ENCODE measurements at regions of chr15 and their contacts with region 1.

Region 1: GRCh38 chr15:82108489-82109078 is 62.8 kb upstream of the MEX3B start:
- DNase-seq: no peak
- ATAC-seq: peak; percentile 99
- H3K4me3 ChIP-seq: no peak overlapping the region
- H3K27ac ChIP-seq: no peak overlapping the region
- H3K4me1 ChIP-seq: no peaks in the 10 kb centered on the region
- H3K27me3 ChIP-seq: no peaks in the 10 kb centered on the region; a peak in 1 of 4 replicates
- CTCF ChIP-seq: peak; percentile 91 to 96 (median 93)
- EP300 ChIP-seq: no peak
- POLR2A ChIP-seq: no peak
- RAD21 ChIP-seq: peak; percentile 82

Region 2: GRCh38 chr15:81666839-81667238 is 441.7 kb before region 1 on chr15:
- CTCF ChIA-PET with region 1: no interaction called
- POLR2A ChIA-PET with region 1: no interaction called
- RAD21 ChIA-PET with region 1: no interaction called
- SMC1A ChIA-PET with region 1: no interaction called
- in situ Hi-C with region 1: no loop called
- intact Hi-C with region 1: no loop called
- DNase-seq: peak; percentile 16
- ATAC-seq: peak; percentile 58; the same call in 2 of the 3 replicates
- H3K4me3 ChIP-seq: no peak overlapping the region
- H3K27ac ChIP-seq: no peak overlapping the region
- H3K4me1 ChIP-seq: no peaks in the 10 kb centered on the region
- H3K27me3 ChIP-seq: no peaks in the 10 kb centered on the region
- CTCF ChIP-seq: no peak
- EP300 ChIP-seq: no peak
- POLR2A ChIP-seq: no peak
- RAD21 ChIP-seq: no peak

Region 3: DNA sequence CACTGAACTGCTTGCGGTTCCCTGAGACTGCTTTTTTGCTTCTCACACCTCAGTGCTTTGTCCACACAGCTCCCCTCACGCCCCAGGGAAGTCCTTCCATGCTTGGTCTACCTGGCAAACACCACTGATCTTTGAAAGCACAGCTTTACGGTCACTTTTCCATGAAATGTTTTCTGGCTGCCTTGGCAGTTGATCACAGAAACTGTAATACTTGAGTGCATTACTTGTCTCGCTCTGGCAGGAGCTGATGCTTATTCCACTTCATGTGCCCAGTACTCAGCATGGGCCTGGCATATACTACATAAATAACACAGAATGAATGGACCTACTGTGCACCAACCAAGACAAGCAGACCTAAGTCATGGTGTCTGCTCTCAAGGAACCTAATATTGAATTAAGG is 183.9 kb before region 1 on chr15:
- CTCF ChIA-PET with region 1: no interaction called
- POLR2A ChIA-PET with region 1: interaction called, 10 read pairs
- RAD21 ChIA-PET with region 1: no interaction called
- SMC1A ChIA-PET with region 1: no interaction called
- in situ Hi-C with region 1: no loop called
- intact Hi-C with region 1: no loop called
- DNase-seq: no peak
- ATAC-seq: no peak
- H3K4me3 ChIP-seq: no peak overlapping the region
- H3K27ac ChIP-seq: no peak overlapping the region
- H3K4me1 ChIP-seq: no peaks in the 10 kb centered on the region
- H3K27me3 ChIP-seq: no peaks in the 10 kb centered on the region
- CTCF ChIP-seq: no peak
- EP300 ChIP-seq: no peak
- POLR2A ChIP-seq: no peak
- RAD21 ChIP-seq: no peak

Region 4: DNA sequence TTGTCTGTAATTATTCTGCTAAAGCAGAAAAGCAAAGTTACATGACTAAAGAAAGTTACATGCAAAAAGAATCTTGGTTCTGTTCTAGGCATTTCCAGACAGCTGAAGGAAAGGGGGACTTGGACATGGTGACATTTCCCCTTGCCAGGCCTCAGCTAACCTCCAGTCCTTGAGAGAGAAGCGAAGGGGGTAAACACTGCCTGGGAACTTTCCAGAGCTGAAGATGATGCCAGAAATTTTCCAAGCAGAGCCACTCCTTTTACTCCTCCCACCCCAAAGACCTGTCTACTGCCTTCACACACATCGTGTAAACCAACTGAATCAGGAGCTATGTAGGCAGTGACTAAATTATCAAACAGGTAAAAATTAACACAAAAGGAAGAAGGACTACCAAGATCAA is 68.2 kb before region 1 on chr15:
- CTCF ChIA-PET with region 1: no interaction called
- POLR2A ChIA-PET with region 1: no interaction called
- RAD21 ChIA-PET with region 1: no interaction called
- SMC1A ChIA-PET with region 1: no interaction called
- in situ Hi-C with region 1: no loop called
- intact Hi-C with region 1: no loop called
- DNase-seq: no peak
- ATAC-seq: peak; percentile 7; the same call in 2 of the 3 replicates
- H3K4me3 ChIP-seq: no peak overlapping the region
- H3K27ac ChIP-seq: no peak overlapping the region
- H3K4me1 ChIP-seq: no peaks in the 10 kb centered on the region; the same call in 1 of the 2 replicates
- H3K27me3 ChIP-seq: peaks cover 0 to 3% of the 10 kb centered on the region in 2 experiments; a peak in 1 of 4 replicates
- CTCF ChIP-seq: no peak
- EP300 ChIP-seq: no peak
- POLR2A ChIP-seq: no peak
- RAD21 ChIP-seq: no peak

Region 5: DNA sequence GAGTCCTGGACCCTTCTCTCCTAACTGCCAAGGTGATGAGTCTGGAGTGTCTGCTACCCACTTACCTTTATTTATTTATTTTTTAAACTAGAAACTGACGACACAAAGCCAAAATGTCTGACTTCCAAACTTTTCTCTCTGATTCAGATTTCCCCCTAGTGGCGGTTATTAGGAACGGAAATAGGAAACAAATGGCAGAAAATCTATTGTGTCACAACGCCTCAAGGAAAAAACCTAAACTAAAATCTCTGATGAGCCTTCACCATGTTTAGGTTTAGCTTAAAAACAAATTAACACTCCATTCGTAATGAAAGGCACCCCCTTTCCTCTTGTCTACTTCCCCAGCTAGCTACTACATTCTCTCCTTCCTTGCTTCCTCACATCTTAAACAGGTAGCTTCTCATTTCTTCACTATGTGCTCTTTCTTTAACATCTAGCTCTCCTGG is 31.3 kb after region 1 on chr15:
- CTCF ChIA-PET with region 1: interaction called, 22 read pairs
- POLR2A ChIA-PET with region 1: no interaction called
- RAD21 ChIA-PET with region 1: interaction called, 6 read pairs
- SMC1A ChIA-PET with region 1: interaction called, 9 read pairs
- in situ Hi-C with region 1: no loop called
- intact Hi-C with region 1: no loop called
- DNase-seq: no peak
- ATAC-seq: peak; percentile 70
- H3K4me3 ChIP-seq: no peak overlapping the region
- H3K27ac ChIP-seq: no peak overlapping the region
- H3K4me1 ChIP-seq: no peaks in the 10 kb centered on the region
- H3K27me3 ChIP-seq: no peaks in the 10 kb centered on the region
- CTCF ChIP-seq: peak; percentile 45 to 63 (median 53)
- EP300 ChIP-seq: no peak
- POLR2A ChIP-seq: no peak
- RAD21 ChIP-seq: peak; percentile 53